PC-9 (cell line): ENCODE measurements at regions of chr4 and their contacts with region 1.

Region 1: DNA sequence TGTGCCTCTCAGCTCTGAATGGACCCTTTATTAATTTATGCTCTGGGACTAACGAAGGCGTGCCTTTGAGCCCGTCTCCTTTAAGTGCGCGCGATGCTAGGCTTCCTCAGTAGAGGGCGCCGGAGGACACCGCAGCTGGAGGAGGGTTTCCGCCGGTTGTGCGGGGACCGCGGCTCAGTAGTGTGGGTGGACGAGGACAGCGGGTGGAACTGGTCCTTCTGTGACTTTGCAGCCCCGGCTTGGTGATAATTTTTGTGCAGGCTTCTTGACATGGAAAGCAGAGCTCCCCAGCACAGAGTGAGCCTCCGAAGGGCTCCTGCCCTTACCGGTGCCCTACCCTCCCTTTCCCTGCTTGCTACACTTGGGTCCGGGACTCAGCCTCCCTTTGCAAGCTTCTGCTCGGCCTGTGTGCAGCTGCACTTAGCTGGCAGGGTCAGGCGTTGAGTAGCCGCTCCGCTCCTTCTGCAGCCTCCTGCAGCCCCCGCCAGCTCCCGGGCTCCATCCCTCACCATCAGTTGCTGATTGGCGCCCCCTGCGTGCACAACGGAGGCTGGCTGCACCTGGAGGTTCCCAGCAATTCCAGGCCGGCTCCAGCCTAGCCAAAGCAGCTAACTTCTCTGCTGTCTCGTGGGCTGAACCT is 26.8 kb upstream of the BOD1L1 start:
- DNase-seq: peak; percentile 50 to 82
- H3K4me3 ChIP-seq: peak overlapping the region; percentile 69
- H3K27ac ChIP-seq: no peak overlapping the region
- H3K4me1 ChIP-seq: peaks cover 20% of the 10 kb centered on the region
- H3K27me3 ChIP-seq: no peaks in the 10 kb centered on the region
- CTCF ChIP-seq: peak; percentile 83

Region 2: GRCh38 chr4:12729384-12729783 is 924.9 kb before region 1 on chr4:
- CTCF ChIA-PET with region 1: no interaction called
- POLR2A ChIA-PET with region 1: no interaction called
- intact Hi-C with region 1: loop called (anchors 5 kb)
- DNase-seq: no peak
- H3K4me3 ChIP-seq: no peak overlapping the region
- H3K27ac ChIP-seq: no peak overlapping the region
- H3K4me1 ChIP-seq: no peaks in the 10 kb centered on the region
- H3K27me3 ChIP-seq: no peaks in the 10 kb centered on the region
- CTCF ChIP-seq: peak; percentile 65

Region 3: GRCh38 chr4:13182133-13182532 is 472.1 kb before region 1 on chr4:
- CTCF ChIA-PET with region 1: no interaction called
- POLR2A ChIA-PET with region 1: no interaction called
- intact Hi-C with region 1: no loop called
- DNase-seq: no peak
- H3K4me3 ChIP-seq: no peak overlapping the region
- H3K27ac ChIP-seq: no peak overlapping the region
- H3K4me1 ChIP-seq: no peaks in the 10 kb centered on the region
- H3K27me3 ChIP-seq: no peaks in the 10 kb centered on the region
- CTCF ChIP-seq: no peak

Region 4: GRCh38 chr4:13403833-13404232 is 250.4 kb before region 1 on chr4:
- CTCF ChIA-PET with region 1: no interaction called
- POLR2A ChIA-PET with region 1: no interaction called
- intact Hi-C with region 1: no loop called
- DNase-seq: no peak
- H3K4me3 ChIP-seq: no peak overlapping the region
- H3K27ac ChIP-seq: no peak overlapping the region
- H3K4me1 ChIP-seq: no peaks in the 10 kb centered on the region
- H3K27me3 ChIP-seq: no peaks in the 10 kb centered on the region
- CTCF ChIP-seq: no peak

Region 5: GRCh38 chr4:13615161-13615560 is 39.1 kb before region 1 on chr4:
- CTCF ChIA-PET with region 1: no interaction called
- POLR2A ChIA-PET with region 1: no interaction called
- intact Hi-C with region 1: no loop called
- DNase-seq: no peak
- H3K4me3 ChIP-seq: no peak overlapping the region
- H3K27ac ChIP-seq: no peak overlapping the region
- H3K4me1 ChIP-seq: no peaks in the 10 kb centered on the region
- H3K27me3 ChIP-seq: no peaks in the 10 kb centered on the region
- CTCF ChIP-seq: no peak

Region 6: DNA sequence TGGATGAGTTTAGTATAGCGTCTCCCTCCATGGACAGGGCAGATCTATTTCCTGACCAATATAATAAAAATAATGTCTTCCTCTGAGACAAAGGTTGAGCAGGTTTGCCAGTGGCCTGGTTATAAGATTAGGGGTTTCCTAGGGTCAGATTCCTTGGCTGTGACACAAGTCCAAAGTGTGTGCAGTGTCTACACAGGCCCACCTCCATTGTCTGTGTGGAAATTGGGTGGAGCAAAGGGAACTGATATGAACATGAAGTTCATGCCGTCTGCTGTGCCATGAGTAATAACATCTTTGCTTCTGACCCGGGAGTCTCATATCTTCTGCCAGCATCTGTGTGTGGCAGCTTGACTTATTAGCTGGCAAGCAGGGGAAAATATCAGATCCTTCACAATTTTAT is 161.0 kb after region 1 on chr4:
- CTCF ChIA-PET with region 1: interaction called, 12 read pairs
- POLR2A ChIA-PET with region 1: no interaction called
- intact Hi-C with region 1: no loop called
- DNase-seq: no peak
- H3K4me3 ChIP-seq: no peak overlapping the region
- H3K27ac ChIP-seq: no peak overlapping the region
- H3K4me1 ChIP-seq: no peaks in the 10 kb centered on the region
- H3K27me3 ChIP-seq: no peaks in the 10 kb centered on the region
- CTCF ChIP-seq: no peak

Region 7: DNA sequence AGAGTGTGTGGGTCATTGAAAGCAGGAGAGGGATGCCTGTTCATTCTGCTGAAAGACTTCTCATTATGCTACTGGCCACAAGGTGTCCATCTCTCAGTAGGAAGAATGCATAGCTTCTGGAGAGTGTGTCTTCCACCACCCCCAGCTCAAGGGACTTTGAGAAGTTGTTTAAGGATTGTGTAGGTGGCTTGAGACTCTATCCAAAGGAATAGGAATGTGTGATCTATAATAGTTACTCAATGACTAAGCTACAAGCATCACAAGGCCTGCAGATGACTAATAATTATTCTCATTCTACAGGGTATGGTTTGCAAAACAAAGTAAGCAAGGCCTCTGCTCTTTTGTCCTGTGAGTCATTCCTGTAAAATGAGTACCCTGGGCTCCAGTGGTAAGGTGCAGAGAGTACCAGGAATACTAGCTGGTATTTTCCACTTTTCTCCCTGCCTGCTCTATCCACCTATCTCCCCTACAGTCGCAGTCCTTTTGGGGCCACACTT is 253.0 kb after region 1 on chr4:
- CTCF ChIA-PET with region 1: interaction called, 3 read pairs
- POLR2A ChIA-PET with region 1: no interaction called
- intact Hi-C with region 1: loop called (anchors 1 kb)
- DNase-seq: peak; percentile 63 to 99
- H3K4me3 ChIP-seq: no peak overlapping the region
- H3K27ac ChIP-seq: peak overlapping the region; percentile 94
- H3K4me1 ChIP-seq: peaks cover 25% of the 10 kb centered on the region
- H3K27me3 ChIP-seq: no peaks in the 10 kb centered on the region
- CTCF ChIP-seq: peak; percentile 61

Region 8: GRCh38 chr4:14264437-14264836 is 610.2 kb after region 1 on chr4:
- CTCF ChIA-PET with region 1: no interaction called
- POLR2A ChIA-PET with region 1: no interaction called
- intact Hi-C with region 1: loop called (anchors 2 kb)
- DNase-seq: peak; percentile 3 to 52
- H3K4me3 ChIP-seq: no peak overlapping the region
- H3K27ac ChIP-seq: no peak overlapping the region
- H3K4me1 ChIP-seq: no peaks in the 10 kb centered on the region
- H3K27me3 ChIP-seq: no peaks in the 10 kb centered on the region
- CTCF ChIP-seq: no peak; the same call in 1 of the 2 replicates

Region 9: GRCh38 chr4:14749910-14750309 is 1095.6 kb after region 1 on chr4:
- CTCF ChIA-PET with region 1: no interaction called
- POLR2A ChIA-PET with region 1: no interaction called
- intact Hi-C with region 1: loop called (anchors 10 kb)
- DNase-seq: peak in 1 of 2 experiments; percentile 29
- H3K4me3 ChIP-seq: no peak overlapping the region
- H3K27ac ChIP-seq: no peak overlapping the region
- H3K4me1 ChIP-seq: no peaks in the 10 kb centered on the region
- H3K27me3 ChIP-seq: no peaks in the 10 kb centered on the region
- CTCF ChIP-seq: peak; percentile 51; the same call in 1 of the 2 replicates

Region 10: GRCh38 chr4:15162465-15163283 is 1508.4 kb after region 1 on chr4:
- CTCF ChIA-PET with region 1: no interaction called
- POLR2A ChIA-PET with region 1: no interaction called
- intact Hi-C with region 1: loop called (anchors 2 kb)
- DNase-seq: peak in 1 of 2 experiments; percentile 48
- H3K4me3 ChIP-seq: no peak overlapping the region
- H3K27ac ChIP-seq: no peak overlapping the region
- H3K4me1 ChIP-seq: peaks cover 15% of the 10 kb centered on the region
- H3K27me3 ChIP-seq: no peaks in the 10 kb centered on the region
- CTCF ChIP-seq: peak; percentile 51; the same call in 1 of the 2 replicates